ENCODE measurements at regions of chrX and their contacts with region 1.

Region 1: DNA sequence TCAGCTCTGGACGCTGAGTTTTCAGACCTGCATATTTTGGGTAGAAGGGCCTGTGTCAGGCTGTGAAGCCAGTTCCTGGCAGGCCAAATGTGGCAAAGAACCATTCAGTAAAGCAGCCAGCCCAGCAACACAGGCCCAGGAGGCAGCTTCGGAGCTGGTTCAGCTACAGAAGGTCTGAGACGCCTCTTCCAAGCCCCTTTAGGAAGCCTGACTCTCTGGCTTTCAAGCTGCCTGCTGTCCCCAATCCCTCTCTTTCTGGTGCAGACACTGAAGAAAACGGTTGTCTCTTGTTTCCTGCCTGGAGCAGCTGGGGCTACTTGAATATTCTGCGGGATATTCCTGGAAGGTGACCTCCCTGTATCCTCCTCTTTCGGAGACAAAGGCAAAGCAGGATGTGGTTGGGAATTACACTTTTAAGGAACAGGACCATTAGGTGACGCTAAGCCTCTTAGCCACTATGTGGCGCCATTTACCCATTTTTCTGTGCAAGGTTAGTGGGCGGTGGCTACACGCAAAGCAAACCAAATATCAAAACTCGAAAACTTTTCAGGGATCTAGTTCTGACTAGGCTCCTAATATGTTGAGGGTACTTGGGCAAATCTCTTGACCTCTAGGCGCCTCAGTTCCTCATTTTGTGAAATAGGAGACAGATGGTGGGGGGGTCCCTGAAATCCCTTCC is 47.2 kb upstream of the LAS1L start:
- DNase-seq: no peak
- ATAC-seq: peak; percentile 90
- H3K4me3 ChIP-seq: no peak overlapping the region
- H3K27ac ChIP-seq: no peak overlapping the region
- H3K4me1 ChIP-seq: peaks cover 14% of the 10 kb centered on the region; the same call in 1 of the 2 replicates
- H3K27me3 ChIP-seq: no peaks in the 10 kb centered on the region
- CTCF ChIP-seq: peak; percentile 70 to 89 (median 87)
- EP300 ChIP-seq: peak in 1 of 2 experiments; percentile 71; a peak in 2 of 4 replicates
- POLR2A ChIP-seq: no peak
- RAD21 ChIP-seq: peak; percentile 96

Region 2: GRCh38 chrX:65871661-65872311 is 290.0 kb after region 1 on chrX:
- CTCF ChIA-PET with region 1: no interaction called
- POLR2A ChIA-PET with region 1: no interaction called
- RAD21 ChIA-PET with region 1: no interaction called
- SMC1A ChIA-PET with region 1: no interaction called
- in situ Hi-C with region 1: no loop called
- intact Hi-C with region 1: loop called (anchors 5 kb)
- DNase-seq: peak; percentile 50
- ATAC-seq: peak; percentile 89
- H3K4me3 ChIP-seq: no peak overlapping the region
- H3K27ac ChIP-seq: no peak overlapping the region
- H3K4me1 ChIP-seq: no peaks in the 10 kb centered on the region
- H3K27me3 ChIP-seq: no peaks in the 10 kb centered on the region
- CTCF ChIP-seq: peak in 2 of 3 experiments; percentile 21 to 22; a peak in 3 of 6 replicates
- EP300 ChIP-seq: no peak
- POLR2A ChIP-seq: no peak
- RAD21 ChIP-seq: peak; percentile 48; the same call in 1 of the 2 replicates

Region 3: DNA sequence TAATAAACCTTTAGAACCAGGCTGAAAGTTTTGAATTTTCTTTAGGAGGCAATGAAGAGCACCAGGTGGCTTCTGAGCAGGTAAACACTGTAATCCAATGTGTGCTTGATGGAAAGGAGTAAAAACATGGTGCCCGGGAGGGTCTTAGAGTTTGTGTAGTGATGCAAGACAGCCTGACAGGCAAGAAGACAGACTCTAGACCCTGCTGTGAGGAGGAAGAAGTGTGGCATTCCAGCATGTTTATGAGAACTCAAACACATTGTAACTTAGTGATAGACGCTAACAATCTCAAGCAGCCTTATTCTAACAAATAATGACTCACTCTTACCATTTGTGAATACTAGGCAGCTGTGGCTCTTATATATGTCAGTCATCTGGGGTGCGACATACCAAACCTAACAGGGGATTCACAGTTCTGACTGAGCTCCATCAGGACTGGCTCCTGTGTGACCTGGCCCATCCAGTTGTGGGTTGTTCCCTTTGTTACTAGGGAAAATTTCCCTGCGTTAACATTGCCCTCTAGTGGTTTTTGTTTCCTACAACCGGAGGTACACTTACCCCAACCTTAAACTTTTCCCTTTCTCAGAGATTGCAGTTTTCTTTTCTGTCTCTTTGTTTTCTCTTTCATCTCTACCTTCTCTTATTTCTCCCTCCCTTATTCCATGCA is 404.3 kb after region 1 on chrX:
- CTCF ChIA-PET with region 1: interaction called, 9 read pairs
- POLR2A ChIA-PET with region 1: no interaction called
- RAD21 ChIA-PET with region 1: interaction called, 6 read pairs
- SMC1A ChIA-PET with region 1: interaction called, 6 read pairs
- in situ Hi-C with region 1: loop called (anchors 5 kb)
- intact Hi-C with region 1: loop called (anchors 1 kb)
- DNase-seq: peak; percentile 55
- ATAC-seq: peak; percentile 98
- H3K4me3 ChIP-seq: no peak overlapping the region
- H3K27ac ChIP-seq: no peak overlapping the region
- H3K4me1 ChIP-seq: no peaks in the 10 kb centered on the region
- H3K27me3 ChIP-seq: no peaks in the 10 kb centered on the region
- CTCF ChIP-seq: peak; percentile 53 to 67 (median 58); a peak in 5 of 6 replicates
- EP300 ChIP-seq: no peak
- POLR2A ChIP-seq: no peak
- RAD21 ChIP-seq: peak; percentile 81

Region 4: GRCh38 chrX:66110112-66110511 is 528.3 kb after region 1 on chrX:
- CTCF ChIA-PET with region 1: interaction called, 5 read pairs
- POLR2A ChIA-PET with region 1: no interaction called
- RAD21 ChIA-PET with region 1: interaction called, 5 read pairs
- SMC1A ChIA-PET with region 1: interaction called, 4 read pairs
- in situ Hi-C with region 1: no loop called
- intact Hi-C with region 1: loop called (anchors 5 kb)
- DNase-seq: no peak
- ATAC-seq: peak; percentile 32
- H3K4me3 ChIP-seq: no peak overlapping the region
- H3K27ac ChIP-seq: no peak overlapping the region
- H3K4me1 ChIP-seq: no peaks in the 10 kb centered on the region
- H3K27me3 ChIP-seq: no peaks in the 10 kb centered on the region
- CTCF ChIP-seq: peak; percentile 33 to 52 (median 34)
- EP300 ChIP-seq: no peak
- POLR2A ChIP-seq: no peak
- RAD21 ChIP-seq: peak; percentile 66

Region 5: GRCh38 chrX:66200855-66201795 is 619.3 kb after region 1 on chrX:
- CTCF ChIA-PET with region 1: interaction called, 5 read pairs
- POLR2A ChIA-PET with region 1: no interaction called
- RAD21 ChIA-PET with region 1: no interaction called
- SMC1A ChIA-PET with region 1: interaction called, 3 read pairs
- in situ Hi-C with region 1: no loop called
- intact Hi-C with region 1: loop called (anchors 10 kb)
- DNase-seq: no peak
- ATAC-seq: peak; percentile 59
- H3K4me3 ChIP-seq: no peak overlapping the region
- H3K27ac ChIP-seq: no peak overlapping the region
- H3K4me1 ChIP-seq: no peaks in the 10 kb centered on the region
- H3K27me3 ChIP-seq: no peaks in the 10 kb centered on the region
- CTCF ChIP-seq: peak; percentile 16 to 40 (median 35); a peak in 5 of 6 replicates
- EP300 ChIP-seq: no peak
- POLR2A ChIP-seq: no peak
- RAD21 ChIP-seq: peak; percentile 56

Region 6: DNA sequence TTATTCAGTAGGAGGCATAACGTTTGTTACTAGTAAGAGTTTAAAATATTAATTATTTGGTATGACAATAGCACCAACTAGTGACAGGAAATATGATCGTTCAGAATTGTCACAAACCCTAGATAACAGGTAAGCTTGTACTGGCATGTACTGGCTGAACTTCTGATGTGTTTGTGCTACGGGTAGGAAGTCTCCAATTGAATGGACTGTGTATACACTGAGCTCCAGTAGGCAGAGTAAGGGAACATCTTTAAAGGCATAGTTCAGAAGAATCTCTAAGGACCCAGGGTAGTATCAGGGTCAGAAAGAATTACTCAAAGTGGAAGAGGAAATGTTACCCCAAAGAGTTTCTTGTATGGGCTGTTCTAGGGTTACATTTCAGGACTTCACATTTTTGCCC is 826.7 kb after region 1 on chrX:
- CTCF ChIA-PET with region 1: interaction called, 4 read pairs
- POLR2A ChIA-PET with region 1: no interaction called
- RAD21 ChIA-PET with region 1: interaction called, 4 read pairs
- SMC1A ChIA-PET with region 1: interaction called, 3 read pairs
- in situ Hi-C with region 1: loop called (anchors 5 kb)
- intact Hi-C with region 1: loop called (anchors 1 kb)
- DNase-seq: peak; percentile 11
- ATAC-seq: peak; percentile 79
- H3K4me3 ChIP-seq: no peak overlapping the region
- H3K27ac ChIP-seq: no peak overlapping the region
- H3K4me1 ChIP-seq: no peaks in the 10 kb centered on the region
- H3K27me3 ChIP-seq: no peaks in the 10 kb centered on the region
- CTCF ChIP-seq: peak; percentile 46 to 56 (median 49); a peak in 4 of 6 replicates
- EP300 ChIP-seq: no peak
- POLR2A ChIP-seq: no peak
- RAD21 ChIP-seq: peak; percentile 57

Region 7: DNA sequence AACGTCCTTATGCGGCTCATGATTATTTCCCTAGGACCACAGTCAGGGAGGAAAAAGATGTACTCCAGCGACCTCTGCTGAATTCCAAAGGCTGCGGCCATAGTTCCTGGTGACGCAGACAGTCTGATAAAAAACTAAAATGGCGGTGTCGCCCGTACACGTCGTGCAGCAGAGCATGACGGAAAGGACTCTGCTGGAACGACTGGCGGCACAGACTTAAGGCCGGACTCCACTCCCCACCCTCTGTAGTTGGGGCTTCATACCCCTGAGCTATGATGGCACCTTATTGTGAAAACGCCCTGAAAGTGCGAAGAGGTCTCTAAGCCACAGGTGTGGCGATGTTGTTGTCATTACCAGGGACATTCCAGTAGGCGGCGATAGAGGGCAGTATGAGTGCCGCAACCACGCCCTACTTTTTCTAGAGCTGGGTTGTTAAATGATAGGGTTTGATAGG is 1147.0 kb after region 1 on chrX:
- CTCF ChIA-PET with region 1: interaction called, 55 read pairs
- POLR2A ChIA-PET with region 1: no interaction called
- RAD21 ChIA-PET with region 1: interaction called, 5 read pairs
- SMC1A ChIA-PET with region 1: interaction called, 15 read pairs
- in situ Hi-C with region 1: loop called (anchors 5 kb)
- intact Hi-C with region 1: loop called (anchors 2 kb)
- DNase-seq: no peak
- ATAC-seq: peak; percentile 69
- H3K4me3 ChIP-seq: no peak overlapping the region
- H3K27ac ChIP-seq: no peak overlapping the region
- H3K4me1 ChIP-seq: no peaks in the 10 kb centered on the region
- H3K27me3 ChIP-seq: no peaks in the 10 kb centered on the region
- CTCF ChIP-seq: peak; percentile 42 to 59 (median 55); a peak in 5 of 6 replicates
- EP300 ChIP-seq: no peak
- POLR2A ChIP-seq: no peak
- RAD21 ChIP-seq: peak; percentile 58

Measured in GM12878 (cell line).